A673 (cell line): ENCODE measurements at regions of chr5 and their contacts with region 1.

Region 1: GRCh38 chr5:135466178-135467050 is 14.3 kb upstream of the TIFAB start:
- DNase-seq: peak; percentile 83
- H3K4me3 ChIP-seq: no peak overlapping the region
- H3K27ac ChIP-seq: no peak overlapping the region
- H3K4me1 ChIP-seq: no peaks in the 10 kb centered on the region
- H3K27me3 ChIP-seq: peaks cover 45% of the 10 kb centered on the region
- CTCF ChIP-seq: peak; percentile 89

Region 2: GRCh38 chr5:135191084-135191826 is 275.2 kb before region 1 on chr5:
- CTCF ChIA-PET with region 1: no interaction called
- POLR2A ChIA-PET with region 1: no interaction called
- intact Hi-C with region 1: no loop called
- DNase-seq: peak; percentile 82
- H3K4me3 ChIP-seq: peak overlapping the region; percentile 43
- H3K27ac ChIP-seq: no peak overlapping the region
- H3K4me1 ChIP-seq: no peaks in the 10 kb centered on the region
- H3K27me3 ChIP-seq: peaks cover 57% of the 10 kb centered on the region
- CTCF ChIP-seq: peak; percentile 96

Region 3: GRCh38 chr5:135511761-135512575 is 45.6 kb after region 1 on chr5:
- CTCF ChIA-PET with region 1: no interaction called
- POLR2A ChIA-PET with region 1: no interaction called
- intact Hi-C with region 1: no loop called
- DNase-seq: no peak
- H3K4me3 ChIP-seq: no peak overlapping the region
- H3K27ac ChIP-seq: no peak overlapping the region
- H3K4me1 ChIP-seq: no peaks in the 10 kb centered on the region
- H3K27me3 ChIP-seq: peaks cover 36% of the 10 kb centered on the region
- CTCF ChIP-seq: no peak

Region 4: DNA sequence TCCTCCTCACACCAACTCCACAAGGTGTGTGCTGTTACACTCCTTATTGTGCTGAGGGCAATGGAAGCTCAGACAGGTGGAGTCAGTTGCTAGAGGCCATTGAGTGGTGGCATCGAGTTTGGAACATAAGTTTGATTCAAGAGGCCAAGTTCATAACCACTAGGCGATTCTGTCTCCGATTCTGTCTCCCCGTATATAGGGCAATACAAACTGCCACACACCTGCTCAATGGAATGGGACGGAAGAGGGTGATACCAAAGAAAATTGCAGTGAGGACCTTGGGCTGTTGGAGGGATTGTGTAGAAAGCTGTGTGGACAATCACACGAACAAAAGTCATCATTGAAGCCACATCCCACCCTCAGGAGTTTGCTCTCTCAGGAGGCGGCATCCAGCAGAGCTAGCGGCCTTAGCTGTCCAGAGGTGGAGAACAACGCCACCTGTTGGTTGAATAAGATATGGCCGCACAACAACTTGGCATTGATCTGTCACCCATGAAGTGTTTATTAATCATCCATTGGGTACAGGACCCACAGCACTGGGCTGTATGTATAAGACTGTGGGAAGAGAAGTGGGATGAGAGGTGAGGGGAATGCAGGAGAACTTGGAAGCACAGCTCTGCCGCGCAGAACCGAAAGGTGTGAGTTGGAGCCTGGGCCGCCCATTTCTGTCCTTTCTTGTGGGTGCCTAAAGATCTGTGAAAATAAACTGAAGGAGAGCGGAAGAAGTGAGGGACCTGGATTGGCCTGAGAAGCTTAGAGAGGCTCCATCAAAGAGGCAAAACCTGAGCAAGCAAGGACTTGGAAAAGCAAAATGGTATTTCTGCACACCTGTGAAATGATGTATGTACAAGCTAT is 85.4 kb after region 1 on chr5:
- CTCF ChIA-PET with region 1: interaction called, 99 read pairs
- POLR2A ChIA-PET with region 1: no interaction called
- intact Hi-C with region 1: loop called (anchors 1 kb)
- DNase-seq: peak; percentile 79
- H3K4me3 ChIP-seq: no peak overlapping the region
- H3K27ac ChIP-seq: no peak overlapping the region
- H3K4me1 ChIP-seq: no peaks in the 10 kb centered on the region
- H3K27me3 ChIP-seq: peaks cover 44% of the 10 kb centered on the region
- CTCF ChIP-seq: peak; percentile 84

Region 5: GRCh38 chr5:135565725-135566421 is 99.5 kb after region 1 on chr5:
- CTCF ChIA-PET with region 1: interaction called, 20 read pairs
- POLR2A ChIA-PET with region 1: no interaction called
- intact Hi-C with region 1: no loop called
- DNase-seq: peak; percentile 72
- H3K4me3 ChIP-seq: no peak overlapping the region
- H3K27ac ChIP-seq: no peak overlapping the region
- H3K4me1 ChIP-seq: peaks cover 5% of the 10 kb centered on the region
- H3K27me3 ChIP-seq: no peaks in the 10 kb centered on the region
- CTCF ChIP-seq: peak; percentile 96

Region 6: GRCh38 chr5:135729321-135729786 is 262.9 kb after region 1 on chr5:
- CTCF ChIA-PET with region 1: no interaction called
- POLR2A ChIA-PET with region 1: no interaction called
- intact Hi-C with region 1: loop called (anchors 1 kb)
- DNase-seq: peak; percentile 43
- H3K4me3 ChIP-seq: no peak overlapping the region
- H3K27ac ChIP-seq: peak overlapping the region; percentile 0
- H3K4me1 ChIP-seq: peaks cover 10% of the 10 kb centered on the region
- H3K27me3 ChIP-seq: no peaks in the 10 kb centered on the region
- CTCF ChIP-seq: peak; percentile 60

Region 7: DNA sequence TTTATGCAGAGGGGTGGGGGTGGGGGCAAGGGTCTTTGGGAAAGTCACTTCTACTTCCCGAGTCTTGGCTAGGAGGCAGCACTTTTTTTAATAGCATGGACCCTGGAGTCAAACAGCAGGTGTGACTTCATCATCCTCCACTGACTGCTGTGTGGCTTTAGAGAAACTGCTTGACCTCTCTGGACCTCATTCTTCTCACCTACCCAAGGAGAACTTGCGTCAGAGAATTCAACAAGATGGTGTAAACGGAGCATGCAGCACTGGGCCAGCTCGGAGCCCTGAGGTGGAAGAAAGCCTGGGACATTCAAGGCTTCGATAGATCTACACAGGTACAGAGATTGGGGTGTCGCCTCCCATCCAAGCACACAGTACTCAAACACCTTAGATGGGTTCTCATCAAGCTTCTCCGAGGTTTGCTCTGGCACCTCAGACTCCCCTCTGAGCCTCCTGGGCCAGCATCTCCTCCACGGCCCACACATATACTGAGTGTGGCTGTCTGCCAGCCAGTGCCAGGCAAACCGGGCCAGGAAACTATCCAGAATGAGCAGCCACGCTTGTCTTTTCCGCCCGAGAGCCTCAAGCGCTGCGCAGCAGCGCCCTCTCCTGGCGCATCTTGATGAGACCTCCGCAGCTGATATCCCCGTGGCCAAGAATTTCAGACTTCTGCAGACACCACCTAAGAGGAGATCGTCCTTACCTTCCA is 363.4 kb after region 1 on chr5:
- CTCF ChIA-PET with region 1: interaction called, 5 read pairs
- POLR2A ChIA-PET with region 1: no interaction called
- intact Hi-C with region 1: loop called (anchors 2 kb)
- DNase-seq: peak; percentile 84
- H3K4me3 ChIP-seq: no peak overlapping the region
- H3K27ac ChIP-seq: no peak overlapping the region
- H3K4me1 ChIP-seq: no peaks in the 10 kb centered on the region
- H3K27me3 ChIP-seq: peaks cover 36% of the 10 kb centered on the region
- CTCF ChIP-seq: peak; percentile 93

Region 8: DNA sequence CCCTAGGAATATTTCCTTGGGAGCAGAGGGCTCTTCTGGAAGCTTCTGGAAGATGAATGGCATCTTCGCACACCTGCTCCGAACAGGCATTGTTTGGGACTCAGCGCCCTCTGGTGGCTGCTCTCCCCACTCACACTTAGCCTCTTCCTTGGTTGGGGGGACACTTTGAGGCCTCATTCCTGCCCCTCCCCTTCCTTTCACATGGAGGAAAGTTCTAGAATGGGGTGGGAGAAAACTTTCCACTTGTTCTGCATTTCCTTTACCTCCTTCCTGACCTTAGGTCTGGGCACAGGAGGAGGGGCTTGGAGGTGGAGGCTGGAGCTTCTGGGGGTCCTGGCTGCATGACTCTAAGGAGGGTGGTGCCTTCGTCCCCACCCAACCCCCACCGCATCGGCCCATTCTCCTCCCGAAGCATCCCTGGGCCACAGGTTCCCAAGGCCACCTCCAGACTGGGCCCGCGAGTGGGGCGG is 745.9 kb after region 1 on chr5:
- CTCF ChIA-PET with region 1: no interaction called
- POLR2A ChIA-PET with region 1: no interaction called
- intact Hi-C with region 1: loop called (anchors 5 kb)
- DNase-seq: peak; percentile 50
- H3K4me3 ChIP-seq: no peak overlapping the region
- H3K27ac ChIP-seq: no peak overlapping the region
- H3K4me1 ChIP-seq: no peaks in the 10 kb centered on the region
- H3K27me3 ChIP-seq: peaks cover 12% of the 10 kb centered on the region
- CTCF ChIP-seq: peak; percentile 94